B cell (primary cell): ENCODE measurements at regions of chr9 and their contacts with region 1.

Region 1: GRCh38 chr9:111896353-111896958 is at the start of gene UGCG:
- DNase-seq: peak; percentile 93
- ATAC-seq: peak; percentile 85
- H3K4me3 ChIP-seq: peak within 1 kb of the TSS; percentile 70 to 95 (median 91)
- H3K4me3 Mint-ChIP-seq: peak within 1 kb of the TSS; percentile 94
- H3K27ac ChIP-seq: peak within 1 kb of the TSS; percentile 54 to 84
- H3K27ac Mint-ChIP-seq: peak within 1 kb of the TSS; percentile 91
- H3K4me1 ChIP-seq: peaks cover 42 to 51% of the 10 kb centered on the region in 2 donors
- H3K4me1 Mint-ChIP-seq: peaks cover 12% of the 10 kb centered on the region
- H3K27me3 ChIP-seq: no peaks in the 10 kb centered on the region
- H3K27me3 Mint-ChIP-seq: no peaks in the 10 kb centered on the region
- CTCF ChIP-seq: no peak
- total RNA-seq, gene UGCG: 53.5 and 54.1 TPM in 2 replicates

Region 2: GRCh38 chr9:110256380-110257096 is 1639.9 kb before region 1 on chr9 and contains the start of gene TXN:
- CTCF ChIA-PET with region 1: no interaction called
- POLR2A ChIA-PET with region 1: no interaction called
- intact Hi-C with region 1: loop called (anchors 10 kb)
- DNase-seq: peak; percentile 92
- ATAC-seq: peak; percentile 88
- H3K4me3 ChIP-seq: peak within 1 kb of the TSS; percentile 75 to 88 (median 83)
- H3K4me3 Mint-ChIP-seq: peak within 1 kb of the TSS; percentile 92
- H3K27ac ChIP-seq: peak within 1 kb of the TSS; percentile 36 to 66
- H3K27ac Mint-ChIP-seq: peak within 1 kb of the TSS; percentile 92
- H3K4me1 ChIP-seq: peaks cover 5 to 21% of the 10 kb centered on the region in 2 donors
- H3K4me1 Mint-ChIP-seq: peaks cover 26% of the 10 kb centered on the region
- H3K27me3 ChIP-seq: no peaks in the 10 kb centered on the region
- H3K27me3 Mint-ChIP-seq: no peaks in the 10 kb centered on the region
- CTCF ChIP-seq: no peak
- total RNA-seq, gene TXN: 29.0 and 30.6 TPM in 2 replicates

Region 3: GRCh38 chr9:111759762-111760639 is 136.5 kb before region 1 on chr9:
- CTCF ChIA-PET with region 1: interaction called, 3 read pairs
- POLR2A ChIA-PET with region 1: no interaction called
- intact Hi-C with region 1: loop called (anchors 1 kb)
- DNase-seq: peak; percentile 82
- ATAC-seq: peak; percentile 82
- H3K4me3 ChIP-seq: no peak overlapping the region
- H3K4me3 Mint-ChIP-seq: no peak overlapping the region
- H3K27ac ChIP-seq: no peak overlapping the region
- H3K27ac Mint-ChIP-seq: no peak overlapping the region
- H3K4me1 ChIP-seq: peaks cover 0 to 3% of the 10 kb centered on the region in 2 donors
- H3K4me1 Mint-ChIP-seq: peaks cover 4% of the 10 kb centered on the region
- H3K27me3 ChIP-seq: no peaks in the 10 kb centered on the region
- H3K27me3 Mint-ChIP-seq: no peaks in the 10 kb centered on the region
- CTCF ChIP-seq: peak; percentile 91

Region 4: DNA sequence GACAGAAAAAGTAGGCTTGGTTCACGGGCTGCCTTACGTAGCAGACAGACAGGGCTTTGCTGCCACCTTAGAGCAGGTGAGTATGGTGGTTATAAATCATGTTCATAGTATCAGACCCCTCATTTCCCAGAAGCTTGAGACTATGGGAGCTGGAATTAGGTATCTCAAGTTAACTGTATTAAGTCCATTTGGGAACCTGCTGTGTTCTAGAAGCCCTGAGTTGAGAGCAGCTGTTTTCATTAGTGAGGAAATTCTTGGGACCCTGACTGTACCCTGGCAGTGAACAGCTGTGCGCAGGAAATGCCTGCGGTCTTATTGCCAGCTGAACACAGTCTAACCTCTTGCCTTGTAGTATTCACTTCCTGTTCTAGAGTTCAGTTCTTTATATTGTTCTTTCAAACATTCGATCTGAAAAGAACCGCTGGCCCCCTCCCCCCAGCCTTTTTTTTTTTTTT is 30.0 kb after region 1 on chr9:
- CTCF ChIA-PET with region 1: interaction called, 3 read pairs
- POLR2A ChIA-PET with region 1: interaction called, 8 read pairs
- intact Hi-C with region 1: loop called (anchors 1 kb)
- DNase-seq: peak; percentile 86
- ATAC-seq: peak; percentile 99
- H3K4me3 ChIP-seq: no peak overlapping the region
- H3K4me3 Mint-ChIP-seq: peak overlapping the region; percentile 33
- H3K27ac ChIP-seq: peak overlapping the region; percentile 25 to 72
- H3K27ac Mint-ChIP-seq: peak overlapping the region; percentile 90
- H3K4me1 ChIP-seq: peaks cover 22 to 32% of the 10 kb centered on the region in 2 donors
- H3K4me1 Mint-ChIP-seq: peaks cover 39% of the 10 kb centered on the region
- H3K27me3 ChIP-seq: no peaks in the 10 kb centered on the region
- H3K27me3 Mint-ChIP-seq: no peaks in the 10 kb centered on the region
- CTCF ChIP-seq: no peak

Region 5: DNA sequence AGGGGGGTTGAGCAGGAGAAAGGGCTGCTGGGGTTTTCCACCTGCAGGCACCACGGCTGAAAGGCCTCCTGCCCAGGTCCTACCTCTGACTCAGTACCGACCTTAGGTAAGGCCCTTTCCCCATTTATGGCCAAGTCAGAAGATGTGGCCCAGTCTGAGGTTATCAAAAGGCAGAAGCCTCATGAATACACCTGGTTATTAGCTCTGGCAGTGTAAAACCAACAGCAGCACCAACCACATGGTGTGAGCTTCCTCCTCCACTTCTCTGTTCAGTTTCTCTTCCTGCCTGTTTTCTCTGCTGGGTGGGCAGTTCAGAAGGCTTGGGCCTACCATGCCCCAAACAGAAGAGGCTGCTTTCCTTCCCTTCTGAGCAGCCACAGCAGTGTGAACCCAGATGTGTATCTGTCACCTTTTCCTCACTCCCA is 87.0 kb after region 1 on chr9:
- CTCF ChIA-PET with region 1: no interaction called
- POLR2A ChIA-PET with region 1: interaction called, 3 read pairs
- intact Hi-C with region 1: loop called (anchors 2 kb)
- DNase-seq: peak; percentile 83
- ATAC-seq: peak; percentile 87
- H3K4me3 ChIP-seq: no peak overlapping the region
- H3K4me3 Mint-ChIP-seq: peak overlapping the region; percentile 44
- H3K27ac ChIP-seq: peak overlapping the region; percentile 70 to 85
- H3K27ac Mint-ChIP-seq: peak overlapping the region; percentile 95
- H3K4me1 ChIP-seq: peaks cover 45 to 54% of the 10 kb centered on the region in 2 donors
- H3K4me1 Mint-ChIP-seq: peaks cover 57% of the 10 kb centered on the region
- H3K27me3 ChIP-seq: no peaks in the 10 kb centered on the region
- H3K27me3 Mint-ChIP-seq: no peaks in the 10 kb centered on the region
- CTCF ChIP-seq: no peak

Region 6: DNA sequence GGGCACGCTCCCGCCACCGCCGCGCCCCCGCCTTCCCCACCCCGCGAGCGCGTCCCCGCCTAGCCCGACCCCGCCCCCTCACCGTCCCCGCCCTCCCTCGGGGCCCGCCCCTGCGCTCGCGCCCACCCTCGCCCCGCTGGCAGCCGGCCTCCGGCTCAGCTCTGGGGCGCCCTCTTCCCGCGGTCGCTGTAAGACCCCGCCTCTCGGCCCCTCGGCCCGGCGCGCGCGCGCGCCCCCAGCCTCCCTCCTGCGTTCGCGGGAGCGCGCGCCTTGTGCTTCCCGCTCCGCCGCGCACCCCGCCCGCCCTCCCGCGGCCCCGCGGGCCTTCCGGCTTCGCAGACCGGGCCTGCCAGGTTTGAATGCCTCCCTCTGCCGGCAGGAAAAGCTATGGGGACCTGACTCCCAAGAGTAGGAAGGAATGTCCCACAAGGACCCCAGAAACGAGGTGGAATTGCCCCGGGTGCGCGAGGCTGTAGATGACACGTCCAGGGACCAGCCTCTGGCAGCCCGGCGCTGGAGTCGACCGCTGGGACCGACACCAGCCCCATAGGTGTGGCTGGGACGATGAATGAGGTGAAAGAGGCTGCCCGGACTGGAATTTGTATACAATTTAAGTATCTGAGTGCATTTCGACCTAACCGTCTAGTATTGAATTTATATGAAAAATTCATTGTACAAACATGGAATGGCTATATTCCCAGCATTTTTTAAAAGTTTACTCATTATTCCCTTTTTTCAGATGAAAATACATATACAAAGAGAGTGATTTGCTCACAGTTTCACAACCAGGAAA is 437.4 kb after region 1 on chr9:
- CTCF ChIA-PET with region 1: no interaction called
- POLR2A ChIA-PET with region 1: interaction called, 6 read pairs
- intact Hi-C with region 1: loop called (anchors 1 kb)
- DNase-seq: peak; percentile 97
- ATAC-seq: peak; percentile 86
- H3K4me3 ChIP-seq: peak overlapping the region; percentile 71 to 93 (median 90)
- H3K4me3 Mint-ChIP-seq: peak overlapping the region; percentile 98
- H3K27ac ChIP-seq: peak overlapping the region; percentile 89 to 97
- H3K27ac Mint-ChIP-seq: peak overlapping the region; percentile 99
- H3K4me1 ChIP-seq: peaks cover 16 to 25% of the 10 kb centered on the region in 2 donors
- H3K4me1 Mint-ChIP-seq: peaks cover 35% of the 10 kb centered on the region
- H3K27me3 ChIP-seq: no peaks in the 10 kb centered on the region
- H3K27me3 Mint-ChIP-seq: no peaks in the 10 kb centered on the region
- CTCF ChIP-seq: peak; percentile 66

Region 7: GRCh38 chr9:113221003-113221799 is 1324.7 kb after region 1 on chr9 and contains the starts of genes FKBP15 and SLC31A1:
- CTCF ChIA-PET with region 1: no interaction called
- POLR2A ChIA-PET with region 1: no interaction called
- intact Hi-C with region 1: loop called (anchors 5 kb)
- DNase-seq: peak; percentile 98
- ATAC-seq: peak; percentile 98
- H3K4me3 ChIP-seq: peak within 1 kb of the TSS; percentile 77 to 97 (median 94)
- H3K4me3 Mint-ChIP-seq: peak within 1 kb of the TSS; percentile 95
- H3K27ac ChIP-seq: peak within 1 kb of the TSS; percentile 59 to 84
- H3K27ac Mint-ChIP-seq: peak within 1 kb of the TSS; percentile 95
- H3K4me1 ChIP-seq: peaks cover 33 to 35% of the 10 kb centered on the region in 2 donors
- H3K4me1 Mint-ChIP-seq: peaks cover 48% of the 10 kb centered on the region
- H3K27me3 ChIP-seq: no peaks in the 10 kb centered on the region
- H3K27me3 Mint-ChIP-seq: no peaks in the 10 kb centered on the region
- CTCF ChIP-seq: no peak
- total RNA-seq, gene FKBP15: 40.6 and 41.2 TPM in 2 replicates
- total RNA-seq, gene SLC31A1: 3.2 and 3.5 TPM in 2 replicates